Thyroid gland (tissue), 4 donors: ENCODE measurements at regions of chr17 and their contacts with region 1.

Region 1: GRCh38 chr17:42422958-42423712 is at the start of gene CAVIN1:
- DNase-seq: peak; percentile 99
- H3K4me3 ChIP-seq: peak within 1 kb of the TSS; percentile 21 to 99 (median 81)
- H3K27ac ChIP-seq: peak within 1 kb of the TSS; percentile 91 to 98 (median 96)
- H3K4me1 ChIP-seq: peaks cover 12 to 16% of the 10 kb centered on the region in 2 donors
- H3K27me3 ChIP-seq: no peaks in the 10 kb centered on the region
- CTCF ChIP-seq: no peak
- POLR2A ChIP-seq: peak; percentile 96 to 97
- total RNA-seq, gene CAVIN1: 173 to 199 (median 187) TPM

Region 2: GRCh38 chr17:42329025-42329976 is 93.8 kb before region 1 on chr17:
- intact Hi-C with region 1: no loop called
- DNase-seq: peak; percentile 60 to 65
- H3K4me3 ChIP-seq: no peak overlapping the region
- H3K27ac ChIP-seq: peak overlapping the region; percentile 65 to 79 (median 75)
- H3K4me1 ChIP-seq: peaks cover 8 to 21% of the 10 kb centered on the region in 2 donors
- H3K27me3 ChIP-seq: no peaks in the 10 kb centered on the region
- CTCF ChIP-seq: no peak
- POLR2A ChIP-seq: peak in 1 of 2 donors; percentile 21

Region 3: GRCh38 chr17:42517516-42517915 is 94.4 kb after region 1 on chr17:
- intact Hi-C with region 1: loop called (anchors 5 kb)
- DNase-seq: peak; percentile 70 to 78
- H3K4me3 ChIP-seq: no peak overlapping the region
- H3K27ac ChIP-seq: peak overlapping the region in 2 of 3 donors; percentile 93 to 99
- H3K4me1 ChIP-seq: peaks cover 24 to 68% of the 10 kb centered on the region in 2 donors
- H3K27me3 ChIP-seq: no peaks in the 10 kb centered on the region
- CTCF ChIP-seq: peak; percentile 73 to 86 (median 76)
- POLR2A ChIP-seq: no peak